A549 (cell line): ENCODE measurements at regions of chr17 and their contacts with region 1.

Region 1: DNA sequence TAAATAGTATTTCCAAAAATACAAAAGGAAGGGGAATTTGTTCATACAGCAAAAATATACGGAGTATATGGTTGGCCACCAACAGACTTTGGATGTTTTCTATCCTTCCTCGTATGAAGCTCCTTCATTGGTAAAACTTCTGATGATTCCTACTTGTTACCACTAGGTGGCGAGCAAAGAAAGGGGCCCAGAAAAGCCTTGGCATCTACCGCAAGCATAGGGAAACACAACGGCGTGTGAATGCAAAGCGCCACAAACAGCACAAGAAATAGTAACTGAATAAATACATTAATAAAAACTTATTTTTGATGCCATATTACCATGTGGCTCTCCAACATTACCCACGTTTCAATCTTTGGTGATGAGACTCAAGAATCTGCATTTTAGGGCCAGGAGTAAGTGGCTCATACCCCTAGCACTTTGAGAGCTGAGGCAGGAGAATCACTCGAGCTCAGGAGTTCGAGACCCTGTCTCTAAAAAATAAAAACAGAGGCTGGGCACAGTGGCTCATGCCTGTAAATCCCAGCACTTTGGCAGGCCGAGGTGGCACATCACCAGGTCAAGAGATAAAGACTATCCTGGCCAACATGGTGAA is 34.5 kb downstream of the YWHAE start:
- DNase-seq: peak; percentile 82 to 87
- ATAC-seq: peak; percentile 82 to 84
- H3K4me3 ChIP-seq: no peak overlapping the region
- H3K27ac ChIP-seq: peak overlapping the region in 1 of 2 experiments; percentile 25; a peak in 2 of 6 replicates
- H3K4me1 ChIP-seq: peaks cover 70% of the 10 kb centered on the region
- CTCF ChIP-seq: peak; percentile 96
- EP300 ChIP-seq: no peak
- POLR2A ChIP-seq: no peak
- RAD21 ChIP-seq: peak; percentile 84 to 88

Region 2: GRCh38 chr17:1347589-1348323 is 17.8 kb before region 1 on chr17:
- CTCF ChIA-PET with region 1: interaction called, 30 read pairs
- POLR2A ChIA-PET with region 1: no interaction called
- DNase-seq: no peak
- ATAC-seq: peak; percentile 62 to 64
- H3K4me3 ChIP-seq: no peak overlapping the region
- H3K27ac ChIP-seq: no peak overlapping the region
- H3K4me1 ChIP-seq: peaks cover 18% of the 10 kb centered on the region
- CTCF ChIP-seq: no peak
- EP300 ChIP-seq: no peak
- POLR2A ChIP-seq: no peak
- RAD21 ChIP-seq: no peak

Region 3: DNA sequence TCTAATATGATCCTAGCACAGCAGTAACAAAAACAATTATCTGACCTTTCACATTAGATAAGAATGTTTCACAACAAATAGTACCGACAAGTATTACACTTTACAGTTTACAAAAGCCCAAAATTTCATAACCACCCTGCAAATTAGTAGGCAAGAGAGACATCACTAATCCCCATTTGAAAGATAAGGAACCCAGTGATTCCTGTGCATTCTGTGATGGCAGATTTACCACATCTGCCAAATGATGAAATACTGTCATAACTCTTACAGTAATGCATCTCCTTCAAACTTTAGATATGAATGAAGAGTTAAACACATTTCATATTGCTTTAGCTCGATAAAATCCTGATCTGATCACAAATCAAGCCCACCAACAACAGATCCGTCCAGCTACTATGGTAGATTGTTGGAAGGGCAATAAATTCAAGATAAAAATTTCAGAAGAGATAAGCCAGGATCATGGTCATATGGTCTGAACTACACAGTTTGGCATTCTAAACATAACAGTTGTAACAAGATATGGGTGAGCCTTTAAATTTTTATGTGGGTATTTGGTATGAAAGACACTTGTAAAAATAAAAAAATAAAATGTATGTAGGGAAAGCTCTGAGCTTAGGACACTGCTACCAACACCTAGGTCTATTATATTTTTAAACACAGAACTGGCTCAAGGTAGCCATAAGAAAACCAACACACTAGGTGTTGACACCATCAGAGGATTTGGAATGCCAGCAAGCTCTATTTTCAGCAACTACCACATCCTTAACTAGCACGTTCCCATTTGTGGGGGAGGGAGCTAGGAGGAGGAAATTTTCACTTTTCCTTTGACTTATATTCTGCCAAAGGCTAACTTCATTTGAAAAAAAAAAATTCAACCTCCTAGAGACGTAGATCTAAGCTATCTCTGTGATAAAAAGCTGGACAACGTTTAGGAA is 25.2 kb after region 1 on chr17:
- CTCF ChIA-PET with region 1: interaction called, 115 read pairs
- POLR2A ChIA-PET with region 1: interaction called, 6 read pairs
- DNase-seq: no peak
- ATAC-seq: no peak
- H3K4me3 ChIP-seq: no peak overlapping the region
- H3K27ac ChIP-seq: no peak overlapping the region
- H3K4me1 ChIP-seq: peaks cover 88% of the 10 kb centered on the region
- CTCF ChIP-seq: no peak
- EP300 ChIP-seq: no peak
- POLR2A ChIP-seq: no peak
- RAD21 ChIP-seq: no peak

Region 4: DNA sequence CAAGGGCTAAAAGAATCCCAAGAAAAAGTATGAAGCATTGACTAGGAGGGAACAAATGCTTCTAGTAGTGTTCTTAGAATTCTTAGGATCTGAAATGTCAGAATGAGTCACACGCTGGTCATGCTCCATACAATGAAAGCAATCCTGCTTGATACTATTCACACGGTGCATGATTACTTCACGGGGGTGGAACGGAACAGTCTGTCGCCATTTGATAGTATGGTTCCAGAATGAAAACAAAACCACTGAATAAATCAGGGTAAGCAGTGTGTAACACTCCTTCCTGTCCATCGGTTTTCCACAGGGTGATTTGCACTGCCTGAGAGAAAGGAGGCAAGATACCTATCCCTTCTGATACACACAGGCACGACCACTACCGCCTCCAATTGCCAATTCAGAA is 57.4 kb after region 1 on chr17:
- CTCF ChIA-PET with region 1: interaction called, 24 read pairs
- POLR2A ChIA-PET with region 1: no interaction called
- DNase-seq: peak; percentile 57 to 71
- ATAC-seq: peak; percentile 82 to 85
- H3K4me3 ChIP-seq: no peak overlapping the region
- H3K27ac ChIP-seq: no peak overlapping the region; a peak in 2 of 6 replicates
- H3K4me1 ChIP-seq: peaks cover 22% of the 10 kb centered on the region
- CTCF ChIP-seq: no peak
- EP300 ChIP-seq: no peak
- POLR2A ChIP-seq: no peak
- RAD21 ChIP-seq: no peak

Region 5: GRCh38 chr17:1455797-1456599 is 90.5 kb after region 1 on chr17 and contains the start of gene CRK:
- CTCF ChIA-PET with region 1: interaction called, 31 read pairs
- POLR2A ChIA-PET with region 1: interaction called, 6 read pairs
- DNase-seq: peak; percentile 96 to 97
- ATAC-seq: peak; percentile 87
- H3K4me3 ChIP-seq: peak within 1 kb of the TSS; percentile 98
- H3K27ac ChIP-seq: peak within 1 kb of the TSS; percentile 95
- H3K4me1 ChIP-seq: peaks cover 33% of the 10 kb centered on the region
- CTCF ChIP-seq: no peak
- EP300 ChIP-seq: no peak
- POLR2A ChIP-seq: peak; percentile 63
- RAD21 ChIP-seq: peak in 1 of 2 experiments; percentile 19; a peak in 1 of 5 replicates
- polyA plus RNA-seq, gene CRK: 117 and 124 TPM in 2 replicates